Panc1 (cell line): ENCODE measurements at regions of chr16 and their contacts with region 1.

Region 1: GRCh38 chr16:31010585-31011325 is at the start of gene STX1B:
- DNase-seq: no peak
- ATAC-seq: no peak
- H3K4me3 ChIP-seq: peak within 1 kb of the TSS in 1 of 2 experiments; percentile 17; a peak in 1 of 4 replicates
- H3K27ac ChIP-seq: no peak within 1 kb of the TSS
- H3K4me1 ChIP-seq: peaks cover 6% of the 10 kb centered on the region; the same call in 1 of the 2 replicates
- H3K27me3 ChIP-seq: no peaks in the 10 kb centered on the region
- CTCF ChIP-seq: no peak
- total RNA-seq, gene STX1B: 3.7 TPM

Region 2: DNA sequence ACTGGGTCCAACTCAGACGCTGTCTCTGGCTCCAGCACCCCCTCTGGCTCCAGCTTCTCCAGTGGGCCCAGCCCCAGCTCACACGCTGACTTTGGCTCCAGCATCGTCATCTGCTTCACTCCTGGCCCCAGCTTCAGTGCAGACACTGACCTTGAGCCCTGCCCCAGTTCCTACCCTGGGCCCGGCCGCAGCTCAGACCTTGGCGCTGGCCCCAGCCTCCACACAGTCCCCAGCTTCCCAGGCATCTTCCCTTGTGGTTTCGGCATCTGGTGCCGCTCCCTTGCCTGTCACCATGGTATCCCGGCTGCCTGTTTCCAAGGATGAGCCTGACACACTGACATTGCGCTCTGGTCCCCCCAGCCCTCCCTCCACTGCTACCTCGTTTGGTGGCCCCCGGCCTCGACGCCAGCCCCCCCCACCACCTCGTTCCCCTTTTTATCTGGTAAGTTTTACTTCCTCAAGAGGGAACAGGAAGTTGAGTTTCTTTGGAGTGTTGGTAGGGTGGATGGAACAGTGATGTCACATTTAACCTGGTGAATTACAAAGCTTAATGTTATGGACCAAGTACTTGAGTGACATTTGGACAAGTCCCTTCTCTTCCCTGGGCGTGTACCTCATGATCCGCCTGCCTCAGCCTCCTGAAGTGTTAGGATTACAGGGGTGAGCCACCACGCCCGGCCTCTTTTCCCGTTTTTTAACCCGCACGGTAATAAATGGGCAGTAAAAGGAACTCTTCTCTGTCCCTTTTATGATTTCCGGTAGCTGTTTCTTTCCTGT is 285.9 kb before region 1 on chr16:
- CTCF ChIA-PET with region 1: no interaction called
- POLR2A ChIA-PET with region 1: no interaction called
- in situ Hi-C with region 1: no loop called
- intact Hi-C with region 1: no loop called
- DNase-seq: no peak
- ATAC-seq: no peak
- H3K4me3 ChIP-seq: no peak overlapping the region
- H3K27ac ChIP-seq: no peak overlapping the region
- H3K4me1 ChIP-seq: no peaks in the 10 kb centered on the region
- H3K27me3 ChIP-seq: no peaks in the 10 kb centered on the region
- CTCF ChIP-seq: no peak

Region 3: GRCh38 chr16:31032736-31033708 is 22.3 kb after region 1 on chr16 and contains the start of gene STX4:
- CTCF ChIA-PET with region 1: no interaction called
- POLR2A ChIA-PET with region 1: interaction called, 11 read pairs
- in situ Hi-C with region 1: no loop called
- intact Hi-C with region 1: no loop called
- DNase-seq: peak; percentile 96
- ATAC-seq: peak; percentile 89
- H3K4me3 ChIP-seq: peak within 1 kb of the TSS; percentile 85 to 98
- H3K27ac ChIP-seq: peak within 1 kb of the TSS; percentile 94
- H3K4me1 ChIP-seq: peaks cover 7% of the 10 kb centered on the region; the same call in 1 of the 2 replicates
- H3K27me3 ChIP-seq: no peaks in the 10 kb centered on the region
- CTCF ChIP-seq: no peak
- total RNA-seq, gene STX4: 65.2 TPM